ENCODE measurements at regions of chr6 and their contacts with region 1.

Region 1: DNA sequence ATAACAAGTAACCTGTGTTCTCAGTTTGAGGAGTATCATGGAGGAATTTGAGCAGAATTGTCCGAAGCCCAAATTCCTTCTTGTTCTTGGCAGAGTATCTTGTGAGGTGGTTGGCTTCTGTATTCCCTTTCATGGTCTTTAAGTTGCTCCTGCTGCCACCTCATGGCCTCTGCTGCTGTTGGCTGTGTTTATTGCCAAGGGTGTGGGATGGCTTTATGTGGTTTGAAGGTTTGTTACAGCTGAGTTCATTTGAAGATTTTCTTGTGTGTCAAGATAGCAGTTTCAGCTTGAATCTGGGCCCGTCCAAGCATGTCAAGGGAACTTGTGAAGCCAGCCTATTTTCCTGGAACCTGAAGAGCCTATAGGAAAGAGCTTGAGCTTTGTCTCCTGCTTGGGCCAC is 20.2 kb upstream of the TTK start:
- DNase-seq: peak; percentile 28 to 50 (median 43)
- H3K4me3 ChIP-seq: no peak overlapping the region
- H3K4me3 Mint-ChIP-seq: peak overlapping the region in 4 of 8 donors; percentile 5 to 33 (median 20)
- H3K27ac ChIP-seq: no peak overlapping the region
- H3K27ac Mint-ChIP-seq: peak overlapping the region; percentile 3 to 69 (median 36)
- H3K4me1 ChIP-seq: peaks cover 25% of the 10 kb centered on the region
- H3K4me1 Mint-ChIP-seq: peaks cover 4 to 30% (median 14%) of the 10 kb centered on the region in 4 donors
- H3K27me3 ChIP-seq: no peaks in the 10 kb centered on the region
- H3K27me3 Mint-ChIP-seq: no peaks in the 10 kb centered on the region

Region 2: DNA sequence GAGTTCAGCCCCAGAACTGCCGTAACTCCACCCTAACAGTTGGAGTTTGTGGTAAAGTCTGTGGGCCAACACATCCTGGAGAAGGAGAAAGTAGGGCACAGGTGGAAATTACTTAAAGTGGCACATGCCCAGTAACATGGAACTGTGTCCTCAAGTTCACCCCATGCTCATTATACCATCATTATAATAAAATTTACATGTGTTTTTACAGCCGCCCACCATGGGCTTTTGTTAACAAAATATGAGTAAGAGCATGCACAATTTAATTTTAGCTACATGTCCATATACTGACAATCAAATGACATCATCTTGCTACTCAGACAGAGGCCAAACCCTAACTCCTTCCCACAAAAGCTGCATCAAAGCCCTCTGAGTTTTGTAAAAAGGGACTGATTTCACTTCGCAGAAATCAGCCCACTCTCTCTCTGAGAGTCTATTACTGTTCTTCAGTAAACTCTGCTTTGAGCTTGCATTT is 19.6 kb before region 1 on chr6:
- CTCF ChIA-PET with region 1: interaction called, 5 read pairs
- POLR2A ChIA-PET with region 1: interaction called, 23 read pairs
- intact Hi-C with region 1: no loop called
- DNase-seq: peak; percentile 54 to 74 (median 70)
- H3K4me3 ChIP-seq: no peak overlapping the region
- H3K4me3 Mint-ChIP-seq: peak overlapping the region in 7 of 8 donors; percentile 9 to 67 (median 47)
- H3K27ac ChIP-seq: no peak overlapping the region
- H3K27ac Mint-ChIP-seq: peak overlapping the region; percentile 76 to 92 (median 85)
- H3K4me1 ChIP-seq: peaks cover 22% of the 10 kb centered on the region
- H3K4me1 Mint-ChIP-seq: peaks cover 3 to 31% (median 13%) of the 10 kb centered on the region in 4 donors
- H3K27me3 ChIP-seq: no peaks in the 10 kb centered on the region
- H3K27me3 Mint-ChIP-seq: peaks cover 7 to 14% of the 10 kb centered on the region in 2 donors

Region 3: DNA sequence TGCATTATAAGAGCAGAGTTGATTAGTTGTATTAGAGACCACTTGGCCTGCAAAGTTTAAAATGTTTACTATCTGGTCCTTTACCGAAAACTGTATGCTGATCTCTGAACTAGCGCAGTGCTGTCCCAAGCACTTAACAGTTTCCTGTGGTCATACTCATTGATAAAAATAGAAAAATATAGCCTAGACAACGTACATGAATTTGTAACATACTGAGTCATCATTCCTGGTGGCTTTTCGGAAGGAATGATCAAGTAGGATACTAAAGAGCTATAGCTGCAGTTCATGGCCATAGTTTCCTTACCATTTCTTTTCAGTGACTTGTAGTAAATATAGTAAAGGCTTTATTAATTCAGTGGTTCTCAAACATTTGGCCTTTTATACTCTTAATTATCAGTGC is 38.5 kb after region 1 on chr6:
- CTCF ChIA-PET with region 1: no interaction called
- POLR2A ChIA-PET with region 1: no interaction called
- intact Hi-C with region 1: no loop called
- DNase-seq: no peak
- H3K4me3 ChIP-seq: no peak overlapping the region
- H3K4me3 Mint-ChIP-seq: no peak overlapping the region
- H3K27ac ChIP-seq: no peak overlapping the region
- H3K27ac Mint-ChIP-seq: no peak overlapping the region
- H3K4me1 ChIP-seq: no peaks in the 10 kb centered on the region
- H3K4me1 Mint-ChIP-seq: no peaks in the 10 kb centered on the region
- H3K27me3 ChIP-seq: no peaks in the 10 kb centered on the region
- H3K27me3 Mint-ChIP-seq: no peaks in the 10 kb centered on the region